A549 (cell line): ENCODE measurements at regions of chr11 and their contacts with region 1.

Region 1: DNA sequence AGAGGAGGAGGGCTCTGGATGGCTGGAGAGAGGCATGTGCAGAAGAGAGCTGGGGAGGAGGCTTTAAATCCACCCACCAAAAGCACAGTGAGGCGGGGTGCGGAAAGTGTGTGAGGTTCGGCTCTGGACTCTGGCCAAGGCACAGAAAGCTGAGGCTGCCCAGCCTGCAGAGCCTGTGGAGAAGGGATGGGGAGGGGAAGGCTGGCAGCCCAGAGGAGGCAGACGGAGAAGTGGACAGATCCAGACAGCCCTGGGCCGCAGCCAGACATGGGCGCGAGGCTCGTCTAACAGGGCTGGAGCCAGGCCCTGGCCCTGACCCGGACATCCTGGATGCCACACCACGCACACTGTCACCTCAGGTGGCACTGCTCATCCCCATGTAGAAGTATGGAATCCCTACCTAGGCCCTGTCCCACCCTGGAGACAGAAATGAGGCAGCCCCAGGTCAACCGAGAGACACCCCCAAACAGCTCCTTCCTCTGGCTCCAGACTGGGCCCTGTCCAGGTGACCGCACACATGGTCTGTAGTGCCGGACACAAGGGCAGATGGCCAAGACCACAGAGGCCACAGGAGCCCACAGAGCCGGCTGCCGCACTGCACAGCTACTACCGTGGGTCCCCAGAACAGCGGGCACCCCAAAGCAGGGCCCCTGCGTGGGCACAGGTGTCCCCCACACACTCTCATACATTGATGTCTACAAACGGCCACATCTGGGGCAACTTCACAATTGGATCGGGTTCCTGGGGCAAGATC is 16.6 kb upstream of the MOB2 start:
- DNase-seq: no peak
- ATAC-seq: no peak
- H3K4me3 ChIP-seq: no peak overlapping the region
- H3K27ac ChIP-seq: no peak overlapping the region
- H3K4me1 ChIP-seq: no peaks in the 10 kb centered on the region
- CTCF ChIP-seq: no peak
- EP300 ChIP-seq: no peak
- POLR2A ChIP-seq: no peak
- RAD21 ChIP-seq: no peak

Region 2: GRCh38 chr11:2831781-2832532 is 1328.8 kb after region 1 on chr11:
- CTCF ChIA-PET with region 1: no interaction called
- POLR2A ChIA-PET with region 1: interaction called, 11 read pairs
- DNase-seq: no peak
- ATAC-seq: no peak
- H3K4me3 ChIP-seq: no peak overlapping the region
- H3K27ac ChIP-seq: no peak overlapping the region
- H3K4me1 ChIP-seq: no peaks in the 10 kb centered on the region; the same call in 2 of the 3 replicates
- CTCF ChIP-seq: no peak
- EP300 ChIP-seq: no peak
- POLR2A ChIP-seq: no peak
- RAD21 ChIP-seq: no peak